GM10248 (cell line): ENCODE measurements at regions of chr14 and their contacts with region 1.

Region 1: DNA sequence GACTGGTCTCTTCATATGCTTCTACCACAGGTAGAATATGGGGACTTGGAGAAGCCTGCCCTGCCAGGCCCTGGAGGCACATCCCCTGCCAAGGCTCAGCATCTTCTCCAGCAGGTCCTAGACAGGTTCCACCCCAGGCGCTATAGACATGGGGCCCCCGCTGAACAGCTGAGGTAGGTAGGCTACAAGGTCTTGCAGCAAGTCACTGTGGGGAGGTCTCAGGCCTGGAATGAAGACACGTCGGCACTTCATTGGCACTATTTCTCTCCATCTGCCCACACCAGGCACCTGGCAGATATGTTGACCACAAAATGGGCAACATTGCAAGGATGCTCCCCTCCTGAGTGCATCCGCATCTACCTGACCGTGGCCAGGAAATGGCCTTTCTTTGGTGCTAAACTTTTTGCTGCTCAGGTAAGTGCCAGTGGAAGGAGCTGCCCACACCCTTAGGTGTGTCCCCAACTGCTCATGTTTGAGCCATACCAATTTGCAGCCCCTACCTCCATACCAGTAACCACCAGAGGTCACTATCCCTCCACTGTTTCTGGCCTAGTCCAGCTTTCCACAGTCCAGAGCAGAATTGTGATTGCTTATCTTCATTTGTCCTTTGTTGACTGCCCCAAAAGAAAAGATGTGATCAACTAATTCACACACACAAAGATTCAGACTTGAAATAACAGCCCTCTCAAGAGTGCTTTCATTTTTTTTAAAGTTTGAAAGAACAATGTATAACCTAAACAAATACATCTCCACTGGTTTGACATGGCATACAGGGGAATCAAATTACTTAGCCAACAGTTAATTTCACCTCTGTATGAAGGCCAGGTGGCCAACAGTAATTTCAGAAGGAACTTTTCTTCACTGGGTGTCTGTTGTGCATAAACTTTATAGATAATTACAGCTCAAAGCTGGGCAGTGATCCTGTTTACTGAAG is 16.1 kb downstream of the PIGH start:
- DNase-seq: peak; percentile 77
- CTCF ChIP-seq: peak; percentile 85

Region 2: DNA sequence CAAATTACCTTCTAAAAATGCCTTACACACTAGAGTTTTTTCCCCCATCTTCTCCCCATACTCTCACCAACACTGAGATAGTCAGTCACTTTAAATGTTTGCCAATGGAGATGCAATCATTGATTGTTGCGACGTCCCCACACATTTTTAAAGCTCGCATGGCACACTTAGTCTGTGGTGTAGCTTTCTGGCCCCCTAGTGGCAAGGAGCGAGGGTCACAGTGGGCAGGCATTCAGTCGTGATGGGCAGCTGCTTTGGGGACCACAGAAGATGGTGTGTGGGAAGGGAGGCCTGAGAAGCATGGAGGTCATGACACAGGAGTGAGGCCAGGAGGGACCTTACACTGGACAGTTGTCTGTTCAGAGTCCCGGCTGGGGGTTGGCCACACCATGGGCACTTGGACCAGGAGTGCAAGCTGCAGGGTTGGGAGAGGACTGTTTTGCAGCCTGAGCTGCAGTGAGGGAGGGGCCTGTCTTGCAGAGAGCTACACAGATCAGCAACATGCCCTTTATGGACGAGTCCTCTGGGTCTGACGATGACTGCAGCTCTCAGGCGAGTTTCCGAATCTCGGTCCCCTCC is 12.6 kb before region 1 on chr14:
- CTCF ChIA-PET with region 1: interaction called, 161 read pairs
- POLR2A ChIA-PET with region 1: no interaction called
- DNase-seq: peak; percentile 81
- CTCF ChIP-seq: peak; percentile 97

Region 3: GRCh38 chr14:67610491-67610890 is 26.5 kb after region 1 on chr14:
- CTCF ChIA-PET with region 1: interaction called, 27 read pairs
- POLR2A ChIA-PET with region 1: no interaction called
- DNase-seq: no peak
- CTCF ChIP-seq: no peak

Region 4: GRCh38 chr14:67666750-67667449 is 82.9 kb after region 1 on chr14:
- CTCF ChIA-PET with region 1: interaction called, 203 read pairs
- POLR2A ChIA-PET with region 1: interaction called, 4 read pairs
- DNase-seq: peak; percentile 69
- CTCF ChIP-seq: peak; percentile 67

Region 5: GRCh38 chr14:67704484-67705089 is 120.6 kb after region 1 on chr14:
- CTCF ChIA-PET with region 1: interaction called, 313 read pairs
- POLR2A ChIA-PET with region 1: no interaction called
- DNase-seq: peak; percentile 67
- CTCF ChIP-seq: peak; percentile 72

Region 6: DNA sequence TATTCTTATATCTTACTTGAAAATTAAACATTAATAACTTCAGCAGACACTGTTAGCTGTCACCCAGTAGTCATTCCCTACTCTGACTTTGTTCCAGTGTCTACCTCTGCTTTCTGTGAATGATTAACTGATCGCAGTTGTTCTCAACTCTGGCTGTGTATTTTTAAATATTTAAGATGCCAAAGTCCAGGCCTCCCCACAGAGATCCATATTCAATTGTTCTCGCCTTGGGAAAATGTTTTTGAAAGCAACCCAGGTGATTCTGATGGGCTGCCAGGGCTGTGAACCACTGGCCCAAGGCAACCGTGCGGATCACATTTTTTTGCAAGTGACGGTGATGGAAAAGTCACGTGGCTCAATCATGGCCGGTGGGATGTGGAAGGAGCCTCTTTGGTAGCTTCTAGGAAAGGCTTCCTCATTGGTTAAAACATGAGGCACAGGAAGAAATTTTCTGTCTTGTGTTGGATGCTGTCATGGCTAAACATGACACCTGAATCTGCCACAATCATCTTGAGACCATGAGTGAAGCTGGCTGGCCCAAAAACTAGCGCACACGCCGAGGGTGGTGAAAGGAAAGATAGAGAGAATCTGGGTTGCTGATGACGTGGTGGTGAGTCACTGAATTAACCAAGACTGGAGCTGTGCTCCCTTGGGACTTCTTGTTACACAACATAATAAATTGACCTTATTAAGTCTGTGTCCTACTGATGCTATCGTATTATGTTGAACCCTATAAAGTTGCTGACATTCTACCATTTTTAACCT is 154.9 kb after region 1 on chr14:
- CTCF ChIA-PET with region 1: no interaction called
- POLR2A ChIA-PET with region 1: no interaction called
- DNase-seq: no peak
- CTCF ChIP-seq: no peak